Activated T-helper 2 cell treated with anti-CD3 and anti-CD28 coated beads, Interferon-gamma antibody, Interleukin-2, Interleukin-4, amounts not matched to agents 10 μg/mL and 5 μg/mL and 100 μg/mL, durations not matched to agents 14 hours and 24 hours and 36 hours (primary cell): ENCODE measurements at regions of chrX and their contacts with region 1.

Region 1: DNA sequence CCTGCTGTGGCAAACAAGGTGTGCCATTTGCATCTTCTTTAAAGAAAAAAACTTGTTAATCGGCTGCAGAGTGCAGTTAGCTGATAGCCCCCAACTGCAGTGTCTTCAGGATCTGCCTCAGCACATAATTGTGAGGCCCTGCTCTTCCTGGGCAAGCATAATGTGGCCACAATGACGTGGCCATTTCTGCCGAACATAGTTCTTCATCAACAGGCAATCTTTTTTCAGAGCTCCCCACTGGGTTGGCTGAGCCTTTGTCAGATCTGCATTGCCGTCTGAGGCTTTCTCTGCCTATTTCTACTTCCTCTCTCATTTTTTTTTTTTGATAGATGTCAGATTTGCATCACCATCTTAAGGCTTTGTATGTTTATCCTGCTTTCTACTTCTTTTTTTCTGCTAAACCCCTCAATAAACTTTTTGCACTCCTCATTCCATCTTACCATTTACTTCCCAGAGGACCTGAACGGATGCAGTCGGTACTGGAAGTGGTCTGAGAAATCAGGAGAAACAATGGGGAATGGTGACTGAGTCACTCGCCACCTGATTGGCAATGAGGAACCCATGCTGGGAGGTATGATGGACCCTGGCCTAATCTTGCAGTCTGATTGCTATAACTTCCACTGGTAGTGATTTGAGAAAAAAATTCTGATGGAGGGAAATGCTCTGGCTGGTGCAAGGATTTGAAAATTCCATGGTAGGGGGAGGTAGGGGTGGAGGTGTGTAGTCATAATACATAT is 21.2 kb upstream of the TAB3 start:
- DNase-seq: peak; percentile 10
- H3K4me3 Mint-ChIP-seq: peak overlapping the region; percentile 42
- H3K27ac Mint-ChIP-seq: peak overlapping the region; percentile 77
- H3K4me1 Mint-ChIP-seq: peaks cover 18% of the 10 kb centered on the region
- H3K27me3 Mint-ChIP-seq: no peaks in the 10 kb centered on the region

Region 2: DNA sequence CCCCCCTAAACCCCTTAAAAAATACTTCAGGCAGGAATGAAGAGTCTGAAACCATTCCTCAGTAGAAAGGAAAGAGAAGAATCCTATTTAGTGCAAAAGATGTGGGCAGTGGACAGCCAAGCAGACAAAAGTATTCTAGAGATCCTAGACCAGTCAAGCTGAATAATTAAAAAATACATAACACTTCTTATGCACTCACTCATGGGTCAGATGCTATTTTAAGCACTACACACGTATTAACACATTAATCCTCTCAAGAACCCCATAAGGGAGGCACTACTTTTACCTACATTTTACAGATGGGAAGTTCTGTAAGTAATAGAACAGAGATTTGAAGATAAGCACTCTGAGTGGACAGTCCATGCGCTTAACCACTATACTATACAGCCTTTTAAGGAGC is 27.2 kb before region 1 on chrX:
- intact Hi-C with region 1: no loop called
- DNase-seq: no peak
- H3K4me3 Mint-ChIP-seq: no peak overlapping the region
- H3K27ac Mint-ChIP-seq: no peak overlapping the region
- H3K4me1 Mint-ChIP-seq: peaks cover 55% of the 10 kb centered on the region
- H3K27me3 Mint-ChIP-seq: no peaks in the 10 kb centered on the region

Region 3: GRCh38 chrX:30900227-30900626 is 10.1 kb before region 1 on chrX:
- intact Hi-C with region 1: loop called (anchors 1 kb)
- DNase-seq: no peak
- H3K4me3 Mint-ChIP-seq: no peak overlapping the region
- H3K27ac Mint-ChIP-seq: no peak overlapping the region
- H3K4me1 Mint-ChIP-seq: peaks cover 18% of the 10 kb centered on the region
- H3K27me3 Mint-ChIP-seq: peaks cover 9% of the 10 kb centered on the region

Region 4: GRCh38 chrX:30971774-30972603 is 61.7 kb after region 1 on chrX:
- intact Hi-C with region 1: loop called (anchors 10 kb)
- DNase-seq: peak; percentile 8
- H3K4me3 Mint-ChIP-seq: peak overlapping the region; percentile 78
- H3K27ac Mint-ChIP-seq: peak overlapping the region; percentile 80
- H3K4me1 Mint-ChIP-seq: peaks cover 15% of the 10 kb centered on the region
- H3K27me3 Mint-ChIP-seq: peaks cover 14% of the 10 kb centered on the region